OCI-LY7 (cell line): ENCODE measurements at regions of chr13 and their contacts with region 1.

Region 1: GRCh38 chr13:30465585-30466357 is at the start of gene HMGB1:
- DNase-seq: peak; percentile 100
- H3K4me3 ChIP-seq: peak within 1 kb of the TSS; percentile 99
- H3K27ac ChIP-seq: peak within 1 kb of the TSS; percentile 93
- H3K4me1 ChIP-seq: peaks cover 44% of the 10 kb centered on the region
- CTCF ChIP-seq: no peak
- total RNA-seq, gene HMGB1: 1,288 and 1,675 TPM in 2 replicates

Region 2: DNA sequence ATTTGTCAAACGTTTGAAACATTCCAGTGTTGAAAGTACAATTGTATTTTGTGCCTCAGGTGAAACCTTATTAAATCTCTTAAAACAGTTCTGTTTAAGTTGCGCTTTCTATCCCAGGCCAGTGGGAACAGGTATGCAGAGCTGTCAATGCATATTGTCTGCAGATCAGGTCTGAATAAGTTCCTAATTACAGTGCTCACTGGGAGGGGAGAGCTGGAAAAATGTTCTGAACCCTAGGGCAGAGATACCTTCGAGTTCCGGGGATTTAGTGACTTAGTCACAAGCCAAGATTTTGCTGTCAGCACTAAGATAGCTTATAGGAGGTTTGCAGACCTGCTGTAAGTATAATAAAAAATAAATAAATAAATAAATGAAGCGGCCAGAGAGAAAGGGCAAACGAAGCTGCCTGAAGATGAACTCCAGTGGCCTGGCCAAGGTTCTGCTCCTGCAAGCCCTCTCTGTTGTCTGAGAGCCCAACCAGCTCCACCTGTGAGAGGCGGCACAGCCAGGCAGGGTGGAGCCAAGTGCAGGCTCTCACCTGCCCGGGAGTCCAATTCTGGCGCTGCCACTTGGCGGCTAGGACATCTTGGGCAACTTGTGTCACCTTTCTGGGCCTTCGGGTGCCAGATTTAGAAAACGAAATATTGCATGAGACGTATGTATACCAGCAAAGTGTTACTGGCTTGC is 772.4 kb before region 1 on chr13:
- CTCF ChIA-PET with region 1: no interaction called
- POLR2A ChIA-PET with region 1: no interaction called
- intact Hi-C with region 1: no loop called
- DNase-seq: no peak
- H3K4me3 ChIP-seq: no peak overlapping the region
- H3K27ac ChIP-seq: no peak overlapping the region
- H3K4me1 ChIP-seq: no peaks in the 10 kb centered on the region
- CTCF ChIP-seq: no peak

Region 3: DNA sequence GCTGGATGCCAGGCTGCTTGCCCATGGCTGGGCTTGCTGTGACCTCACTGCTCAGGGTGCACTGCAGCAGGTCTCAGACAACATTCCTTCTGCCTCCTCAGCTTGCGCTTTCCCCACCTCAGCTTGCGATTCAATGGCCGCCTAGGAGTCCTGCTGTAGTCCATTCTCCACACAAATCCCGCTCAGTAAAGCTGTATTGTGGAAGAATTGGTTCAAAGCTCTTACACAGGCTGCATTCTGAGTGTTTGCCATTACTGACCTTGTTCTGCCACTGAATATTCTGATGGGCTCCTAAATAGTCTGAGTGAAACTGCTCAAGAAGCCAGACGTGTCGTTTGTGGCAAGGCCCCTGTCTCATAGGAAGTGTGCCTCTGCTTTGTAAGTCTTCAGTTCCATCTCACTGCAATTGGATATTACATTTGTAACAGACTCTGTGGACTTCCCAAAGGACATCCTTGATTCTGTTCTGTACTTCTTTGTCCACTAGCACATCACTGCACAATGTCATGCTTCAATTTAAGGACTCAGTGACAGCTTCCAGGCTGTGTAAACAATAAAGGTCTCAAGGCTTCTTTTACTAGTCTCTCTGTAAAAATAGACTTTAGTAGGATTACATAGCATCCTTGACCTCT is 208.2 kb before region 1 on chr13:
- CTCF ChIA-PET with region 1: no interaction called
- POLR2A ChIA-PET with region 1: no interaction called
- intact Hi-C with region 1: loop called (anchors 1 kb)
- DNase-seq: peak; percentile 54
- H3K4me3 ChIP-seq: peak overlapping the region; percentile 42
- H3K27ac ChIP-seq: peak overlapping the region; percentile 60
- H3K4me1 ChIP-seq: peaks cover 28% of the 10 kb centered on the region
- CTCF ChIP-seq: no peak

Region 4: DNA sequence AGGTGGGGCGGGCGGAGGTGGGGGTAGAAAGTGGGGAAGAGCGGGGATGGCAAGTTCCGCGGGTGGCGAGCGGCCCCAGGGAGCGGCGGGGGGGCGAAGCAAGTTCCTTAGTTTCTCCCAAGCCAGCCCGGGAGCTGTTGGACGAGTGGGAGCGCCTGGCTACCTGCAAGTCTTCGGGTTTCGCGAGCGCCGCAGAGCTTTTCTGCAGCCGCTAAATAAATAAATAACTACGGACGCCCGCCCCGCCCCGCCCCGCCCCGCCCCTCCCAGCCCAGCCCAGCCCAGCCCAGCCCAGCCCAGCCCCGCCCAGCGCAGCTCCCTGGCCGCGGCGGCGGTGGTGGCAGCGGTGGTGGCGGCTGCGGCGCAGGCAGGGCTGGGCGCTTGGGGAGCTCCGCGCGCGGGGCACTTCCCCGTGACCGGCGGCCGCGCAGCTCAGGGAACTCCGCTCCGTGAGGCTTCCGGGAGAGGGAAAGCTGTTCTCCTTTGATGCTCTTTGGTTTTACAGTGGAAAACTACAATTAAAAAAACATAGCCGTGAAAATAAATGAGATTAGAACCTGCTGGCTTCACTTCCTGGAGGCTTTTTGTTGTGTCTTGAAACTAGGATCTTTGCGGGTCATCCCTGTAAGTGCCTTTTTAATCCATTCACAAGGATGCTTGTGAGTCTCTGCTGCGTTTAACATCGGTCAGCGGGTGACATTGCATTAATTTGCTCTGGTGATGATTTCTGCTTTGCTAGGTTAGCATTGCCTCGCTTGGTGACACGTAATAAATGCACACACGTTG is 43.5 kb before region 1 on chr13 and contains the start of gene UBE2L5:
- CTCF ChIA-PET with region 1: no interaction called
- POLR2A ChIA-PET with region 1: interaction called, 4 read pairs
- intact Hi-C with region 1: loop called (anchors 5 kb)
- DNase-seq: peak; percentile 88
- H3K4me3 ChIP-seq: peak within 1 kb of the TSS; percentile 72
- H3K27ac ChIP-seq: peak within 1 kb of the TSS; percentile 76
- H3K4me1 ChIP-seq: peaks cover 77% of the 10 kb centered on the region
- CTCF ChIP-seq: no peak
- total RNA-seq, gene UBE2L5: 0.15 and 0.22 TPM in 2 replicates

Region 5: GRCh38 chr13:30551189-30551588 is 85.4 kb after region 1 on chr13:
- CTCF ChIA-PET with region 1: no interaction called
- POLR2A ChIA-PET with region 1: interaction called, 3 read pairs
- intact Hi-C with region 1: loop called (anchors 2 kb)
- DNase-seq: peak; percentile 83
- H3K4me3 ChIP-seq: no peak overlapping the region
- H3K27ac ChIP-seq: no peak overlapping the region
- H3K4me1 ChIP-seq: peaks cover 25% of the 10 kb centered on the region
- CTCF ChIP-seq: peak; percentile 93

Region 6: DNA sequence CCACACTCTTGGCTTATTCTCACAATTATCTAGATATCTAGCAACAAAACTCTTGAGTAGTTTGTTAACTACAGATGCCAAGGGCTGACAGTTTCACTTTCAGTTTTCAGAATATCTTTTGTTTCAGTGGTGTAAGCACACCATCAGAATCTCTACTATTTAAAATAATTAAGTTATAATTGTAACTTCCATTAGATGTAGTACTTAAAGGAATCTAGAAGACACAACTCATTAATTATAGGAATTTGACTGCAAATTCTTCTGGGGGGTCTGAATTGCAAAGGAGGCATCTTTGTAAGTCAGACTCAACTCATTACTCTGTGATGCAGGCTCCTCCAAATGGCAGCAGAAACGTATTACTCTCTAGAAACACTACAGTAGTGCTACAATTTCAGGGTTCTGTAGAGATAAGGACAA is 107.1 kb after region 1 on chr13:
- CTCF ChIA-PET with region 1: no interaction called
- POLR2A ChIA-PET with region 1: no interaction called
- intact Hi-C with region 1: loop called (anchors 5 kb)
- DNase-seq: peak; percentile 80
- H3K4me3 ChIP-seq: peak overlapping the region; percentile 60
- H3K27ac ChIP-seq: peak overlapping the region; percentile 46
- H3K4me1 ChIP-seq: peaks cover 29% of the 10 kb centered on the region
- CTCF ChIP-seq: peak; percentile 88

Region 7: DNA sequence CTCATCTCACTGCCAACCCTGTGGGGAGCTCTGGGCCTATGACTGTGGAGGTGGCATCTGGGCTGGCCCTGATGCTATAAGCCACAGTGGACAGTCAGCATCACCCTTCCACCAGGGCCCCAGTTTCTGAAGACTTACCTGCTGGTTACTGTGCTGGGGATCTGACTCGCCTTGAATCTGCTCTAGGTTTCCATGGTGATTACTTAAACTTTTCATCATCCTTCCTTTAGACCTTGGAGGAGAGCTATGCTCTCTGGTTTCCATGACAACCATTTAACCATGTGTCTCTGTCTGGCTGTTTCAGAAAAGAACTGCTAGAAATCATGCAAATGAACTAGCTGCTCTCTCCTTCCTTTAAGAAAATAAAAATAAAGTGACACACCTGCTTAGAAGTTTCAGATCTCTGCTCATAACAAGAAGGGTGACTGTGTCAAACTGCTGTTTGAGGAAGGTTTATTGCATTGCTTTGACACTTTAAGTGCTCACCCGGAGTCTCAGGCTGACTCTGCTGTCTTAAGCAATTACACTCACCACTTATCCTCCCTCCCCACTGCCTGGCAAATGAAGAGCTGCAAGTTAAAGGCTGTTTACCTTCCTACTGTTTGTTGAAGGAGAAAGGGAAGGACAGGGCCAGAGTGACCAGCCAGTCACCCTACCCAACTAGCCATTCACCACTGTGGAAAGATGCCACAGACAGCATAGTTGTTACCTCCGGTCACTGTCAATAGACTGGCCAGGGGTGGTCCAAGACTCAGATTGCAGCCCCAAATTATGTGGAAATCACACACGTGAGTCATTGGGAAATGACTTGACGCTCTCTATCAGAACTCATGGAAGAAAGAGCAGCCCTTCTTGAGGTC is 608.3 kb after region 1 on chr13:
- CTCF ChIA-PET with region 1: no interaction called
- POLR2A ChIA-PET with region 1: no interaction called
- intact Hi-C with region 1: no loop called
- DNase-seq: peak; percentile 96
- H3K4me3 ChIP-seq: peak overlapping the region; percentile 50
- H3K27ac ChIP-seq: peak overlapping the region; percentile 96
- H3K4me1 ChIP-seq: peaks cover 44% of the 10 kb centered on the region
- CTCF ChIP-seq: no peak